A673 (cell line): ENCODE measurements at regions of chr1 and their contacts with region 1.

Region 1: GRCh38 chr1:212608209-212608955 is at the start of gene ATF3:
- DNase-seq: peak; percentile 99
- H3K4me3 ChIP-seq: peak within 1 kb of the TSS; percentile 75
- H3K27ac ChIP-seq: peak within 1 kb of the TSS; percentile 86
- H3K4me1 ChIP-seq: peaks cover 62% of the 10 kb centered on the region
- H3K27me3 ChIP-seq: peaks cover 48% of the 10 kb centered on the region
- CTCF ChIP-seq: no peak
- total RNA-seq, gene ATF3: 12.6 and 16.0 TPM in 2 replicates

Region 2: DNA sequence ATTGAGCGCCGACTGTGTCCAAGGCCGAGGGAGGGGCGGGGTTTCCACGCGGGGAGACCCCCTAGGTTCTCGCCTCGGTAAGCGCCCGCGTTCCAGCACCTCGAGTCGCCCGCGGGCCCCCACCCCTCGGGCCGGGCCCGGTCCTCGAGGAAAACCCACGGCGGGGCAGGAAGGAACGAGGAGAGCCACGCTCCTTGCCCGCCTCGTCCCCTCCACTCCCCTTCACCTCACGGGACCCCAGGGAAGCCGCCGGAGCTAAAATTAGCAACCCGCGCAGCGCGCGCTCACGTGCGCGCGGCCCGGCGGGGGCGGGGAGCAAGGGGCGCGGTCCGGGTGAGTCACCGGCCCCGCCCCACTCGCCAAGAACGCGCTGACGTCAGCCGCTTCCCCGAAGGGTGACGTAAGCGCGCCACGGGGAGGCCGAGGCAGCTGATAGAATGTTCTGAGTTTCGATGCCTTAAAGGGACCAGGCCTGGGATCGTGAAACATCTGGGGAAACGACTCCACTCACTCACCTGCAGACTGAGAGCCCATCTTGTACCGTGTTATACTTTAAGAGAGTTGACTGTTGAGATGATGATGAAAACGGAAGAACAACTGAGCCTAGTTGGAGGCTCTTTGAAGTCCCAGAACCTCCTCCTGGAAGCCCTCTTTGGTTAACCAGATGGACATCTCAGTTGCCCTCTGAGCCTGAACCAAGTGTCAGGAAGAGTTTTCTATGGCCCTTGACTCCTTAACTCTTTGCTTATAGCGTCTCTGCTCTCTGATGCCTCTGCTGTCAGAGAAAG is 49.5 kb before region 1 on chr1:
- CTCF ChIA-PET with region 1: interaction called, 5 read pairs
- POLR2A ChIA-PET with region 1: interaction called, 15 read pairs
- intact Hi-C with region 1: loop called (anchors 2 kb)
- DNase-seq: peak; percentile 95
- H3K4me3 ChIP-seq: peak overlapping the region; percentile 57
- H3K27ac ChIP-seq: peak overlapping the region; percentile 83
- H3K4me1 ChIP-seq: peaks cover 11% of the 10 kb centered on the region
- H3K27me3 ChIP-seq: no peaks in the 10 kb centered on the region
- CTCF ChIP-seq: no peak

Region 3: GRCh38 chr1:212621951-212622305 is 13.5 kb after region 1 on chr1:
- CTCF ChIA-PET with region 1: interaction called, 11 read pairs
- POLR2A ChIA-PET with region 1: interaction called, 11 read pairs
- intact Hi-C with region 1: no loop called
- DNase-seq: peak; percentile 72
- H3K4me3 ChIP-seq: no peak overlapping the region
- H3K27ac ChIP-seq: no peak overlapping the region
- H3K4me1 ChIP-seq: peaks cover 51% of the 10 kb centered on the region
- H3K27me3 ChIP-seq: no peaks in the 10 kb centered on the region
- CTCF ChIP-seq: no peak

Region 4: GRCh38 chr1:212791676-212792395 is 183.5 kb after region 1 on chr1 and contains the starts of genes NSL1 and TATDN3:
- CTCF ChIA-PET with region 1: no interaction called
- POLR2A ChIA-PET with region 1: no interaction called
- intact Hi-C with region 1: loop called (anchors 5 kb)
- DNase-seq: peak; percentile 95
- H3K4me3 ChIP-seq: peak within 1 kb of the TSS; percentile 80
- H3K27ac ChIP-seq: peak within 1 kb of the TSS; percentile 81
- H3K4me1 ChIP-seq: peaks cover 4% of the 10 kb centered on the region
- H3K27me3 ChIP-seq: no peaks in the 10 kb centered on the region
- CTCF ChIP-seq: no peak
- total RNA-seq, gene NSL1: 48.5 and 53.6 TPM in 2 replicates
- total RNA-seq, gene TATDN3: 17.3 and 22.6 TPM in 2 replicates

Region 5: GRCh38 chr1:214416417-214416816 is 1808.0 kb after region 1 on chr1:
- CTCF ChIA-PET with region 1: no interaction called
- POLR2A ChIA-PET with region 1: interaction called, 10 read pairs
- intact Hi-C with region 1: no loop called
- DNase-seq: peak; percentile 35
- H3K4me3 ChIP-seq: no peak overlapping the region
- H3K27ac ChIP-seq: peak overlapping the region; percentile 46
- H3K4me1 ChIP-seq: peaks cover 85% of the 10 kb centered on the region
- H3K27me3 ChIP-seq: no peaks in the 10 kb centered on the region
- CTCF ChIP-seq: no peak